ENCODE measurements at regions of chr7 and their contacts with region 1.

Region 1: DNA sequence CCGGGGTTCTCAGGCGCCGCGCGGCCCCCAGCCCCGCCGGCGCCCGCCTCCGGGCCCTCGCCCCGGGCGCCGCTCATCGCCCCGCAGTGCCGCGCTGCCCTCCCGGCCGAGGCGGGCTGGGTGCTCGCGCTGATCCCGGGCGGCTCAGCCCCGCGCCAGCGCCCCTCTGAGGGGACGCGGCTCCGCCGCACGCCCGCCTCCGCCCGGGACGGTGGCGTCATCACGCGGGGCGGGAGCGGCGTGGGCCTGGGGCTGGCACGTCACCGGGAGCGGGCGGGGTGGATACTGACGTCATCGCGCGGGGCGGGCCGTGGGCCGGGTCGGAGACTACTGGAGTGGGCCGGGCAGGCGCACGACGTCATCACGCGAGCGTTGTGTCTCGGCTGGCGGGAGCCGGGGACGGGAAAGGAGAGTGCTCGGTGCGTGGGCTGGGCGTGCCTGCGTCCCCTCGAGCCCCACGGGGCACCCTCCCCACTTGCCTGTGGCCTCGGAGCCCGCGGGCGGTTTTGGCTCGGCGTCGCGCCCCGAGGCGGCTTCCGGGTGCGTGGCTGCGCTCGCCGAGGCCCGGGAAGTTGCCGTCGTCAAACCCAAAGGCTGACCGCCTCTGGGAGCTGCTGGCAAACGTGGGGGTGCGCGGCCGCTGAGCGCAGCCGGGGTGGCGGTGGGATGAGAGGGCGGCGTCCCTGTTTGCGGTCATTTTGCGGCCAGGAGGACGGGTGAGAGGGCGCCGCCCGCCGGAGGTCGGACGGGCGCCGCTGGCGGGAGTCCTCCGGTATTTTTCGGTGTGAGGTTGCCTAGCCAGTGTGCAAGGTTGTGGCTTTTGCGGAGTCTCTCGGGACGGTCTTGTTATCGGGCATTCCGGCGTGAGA is at the start of gene ESYT2:
- DNase-seq: peak; percentile 100
- ATAC-seq: peak; percentile 95
- total RNA-seq, gene ESYT2: 42.5 TPM

Region 2: GRCh38 chr7:158704704-158705468 is 124.7 kb before region 1 on chr7 and contains the start of gene NCAPG2:
- intact Hi-C with region 1: loop called (anchors 5 kb)
- DNase-seq: peak; percentile 100
- ATAC-seq: peak; percentile 99
- total RNA-seq, gene NCAPG2: 6.4 TPM

Region 3: DNA sequence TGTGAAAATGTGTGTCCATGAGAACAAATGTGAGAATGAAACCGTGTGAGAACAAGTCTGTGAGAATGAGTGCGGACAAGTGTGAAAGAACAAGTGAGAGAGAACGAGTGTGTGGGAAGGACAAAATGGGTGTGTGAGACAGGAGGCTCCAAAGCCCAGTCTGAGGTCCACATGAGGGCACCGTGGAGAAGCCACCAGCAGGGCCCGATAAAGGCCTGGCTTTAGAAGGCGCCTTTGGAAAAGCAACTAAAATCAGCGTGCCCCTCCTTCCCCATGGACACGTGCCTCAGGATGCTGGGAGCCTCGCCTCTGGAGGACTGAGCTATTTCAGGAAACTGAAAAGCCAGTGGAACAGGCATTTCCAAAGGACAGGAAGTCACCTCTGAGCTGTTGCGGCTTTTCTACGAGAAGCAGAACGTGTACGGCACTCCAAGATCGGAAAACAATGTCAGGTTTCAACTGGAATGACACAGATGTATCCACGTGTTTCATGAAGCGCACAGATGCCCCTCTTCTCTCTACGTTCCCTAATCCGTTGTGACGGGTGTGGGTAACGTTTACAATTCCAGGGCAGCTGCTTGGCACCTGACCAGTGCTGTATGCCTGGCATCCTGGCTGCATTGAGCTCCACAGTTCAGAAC is 46.7 kb before region 1 on chr7:
- intact Hi-C with region 1: loop called (anchors 1 kb)
- DNase-seq: peak; percentile 74
- ATAC-seq: peak; percentile 91

Region 4: DNA sequence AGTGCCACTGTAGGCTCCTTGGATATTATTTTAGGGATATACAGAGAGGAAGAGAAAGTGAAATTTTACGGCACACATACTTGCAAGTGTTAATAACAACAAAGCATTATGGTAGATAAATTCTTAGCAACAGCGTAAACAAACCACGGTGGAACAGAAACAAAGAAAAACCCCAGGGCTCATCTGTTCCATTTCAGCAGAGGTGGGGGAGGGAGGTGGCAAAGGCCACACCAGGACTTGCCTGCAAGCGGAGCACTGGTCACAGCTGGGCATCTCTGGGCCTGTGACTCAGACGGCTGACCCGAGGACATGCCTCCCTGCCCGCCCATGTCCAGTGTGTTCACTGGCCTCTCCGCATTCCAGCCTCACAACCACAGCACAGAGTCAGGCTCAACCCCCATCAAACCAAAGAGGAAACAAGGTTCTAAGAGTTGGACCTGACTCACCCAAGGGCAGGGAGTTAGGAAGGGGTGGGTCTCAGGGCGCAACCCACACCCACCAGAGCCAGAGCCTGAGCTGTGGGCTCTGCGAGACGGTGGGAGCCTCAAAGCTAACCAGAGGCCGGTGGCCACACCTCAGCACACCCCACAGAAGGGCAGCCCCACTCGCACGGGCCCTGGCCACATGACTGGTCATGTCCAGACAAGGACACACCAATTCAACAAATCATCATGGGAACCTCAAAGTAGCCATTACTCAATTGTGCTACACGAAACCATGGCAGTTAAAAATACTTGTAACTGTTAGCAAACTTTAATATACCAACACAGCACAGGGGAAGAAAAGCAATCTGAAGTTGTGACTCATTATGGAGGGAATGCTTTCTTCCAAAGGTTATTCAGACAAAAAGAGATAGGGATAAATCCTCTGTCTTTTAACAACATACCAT is 11.0 kb before region 1 on chr7:
- intact Hi-C with region 1: loop called (anchors 1 kb)
- DNase-seq: peak; percentile 92
- ATAC-seq: peak; percentile 90

Region 5: DNA sequence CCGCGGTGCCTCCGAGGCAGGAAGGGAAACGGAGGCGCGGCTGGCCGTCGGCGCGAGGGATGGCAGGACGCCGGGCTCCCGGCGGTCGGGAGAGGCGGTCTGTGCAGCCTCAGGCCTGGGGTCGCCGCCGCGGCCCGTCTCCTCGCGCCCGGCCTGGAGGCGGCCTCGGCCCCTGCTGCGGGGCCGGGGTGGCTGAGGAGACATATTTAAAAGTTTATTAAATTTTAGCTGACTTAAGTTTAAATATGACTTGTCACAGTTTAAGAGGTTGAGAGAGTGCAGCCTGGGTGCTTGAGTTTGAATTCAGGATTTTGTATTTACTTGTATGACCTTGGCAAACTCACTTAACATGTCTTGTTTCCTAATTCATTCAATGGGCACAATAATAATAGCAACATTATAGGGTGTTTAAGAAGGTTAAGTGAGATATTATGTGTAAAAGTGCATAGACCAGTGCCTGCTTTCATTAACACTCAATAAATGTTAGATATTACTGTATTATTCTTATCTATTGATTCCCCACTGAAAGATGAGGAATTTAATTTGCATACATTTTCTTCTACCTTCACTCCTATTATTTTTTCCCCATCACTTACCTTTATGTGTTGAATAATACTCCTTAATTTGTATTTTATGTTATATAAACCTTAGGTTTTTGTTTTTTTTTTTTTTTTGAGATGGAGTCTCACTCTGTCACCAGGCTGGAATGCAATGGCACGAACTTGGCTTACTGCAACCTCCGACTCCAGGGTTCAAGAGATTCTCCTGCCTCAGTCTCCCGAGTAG is 27.5 kb after region 1 on chr7:
- intact Hi-C with region 1: loop called (anchors 2 kb)
- DNase-seq: no peak
- ATAC-seq: peak; percentile 4

Region 6: GRCh38 chr7:158863611-158864506 is 34.3 kb after region 1 on chr7:
- intact Hi-C with region 1: loop called (anchors 2 kb)
- DNase-seq: peak; percentile 91
- ATAC-seq: peak; percentile 91

Region 7: DNA sequence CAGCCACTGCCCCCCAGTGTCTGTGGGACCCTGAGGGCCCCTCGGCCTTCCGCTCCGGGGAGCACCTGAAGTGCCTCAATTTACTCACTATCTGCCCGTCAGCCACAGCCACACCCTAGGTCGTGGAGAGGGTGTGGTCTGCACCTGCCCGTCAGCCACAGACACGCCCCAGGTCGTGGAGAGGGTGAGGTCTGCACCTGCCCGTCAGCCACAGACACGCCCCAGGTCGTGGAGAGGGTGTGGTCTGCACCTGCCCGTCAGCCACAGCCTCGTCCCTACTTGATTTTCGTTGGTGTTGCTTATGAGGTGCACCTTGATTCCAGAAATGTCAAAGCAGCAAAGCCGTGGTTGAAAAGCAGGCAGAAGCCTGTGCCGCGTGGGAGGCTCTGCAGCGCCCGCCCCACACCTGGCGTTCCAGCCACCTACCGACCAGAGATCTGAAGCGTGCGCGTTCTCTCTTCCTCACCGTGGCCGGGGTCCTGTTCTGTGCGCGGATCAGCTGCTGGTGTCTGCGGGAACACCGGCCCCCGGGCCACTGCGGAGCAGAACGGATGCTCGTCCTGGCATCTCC is 128.4 kb after region 1 on chr7:
- intact Hi-C with region 1: no loop called
- DNase-seq: no peak
- ATAC-seq: peak; percentile 59